Activated T-helper 2 cell treated with anti-CD3 and anti-CD28 coated beads, Interferon-gamma antibody, Interleukin-2, Interleukin-4, amounts not matched to agents 10 μg/mL and 5 μg/mL and 100 μg/mL, durations not matched to agents 14 hours and 24 hours and 36 hours (primary cell): ENCODE measurements at regions of chr17 and their contacts with region 1.

Region 1: DNA sequence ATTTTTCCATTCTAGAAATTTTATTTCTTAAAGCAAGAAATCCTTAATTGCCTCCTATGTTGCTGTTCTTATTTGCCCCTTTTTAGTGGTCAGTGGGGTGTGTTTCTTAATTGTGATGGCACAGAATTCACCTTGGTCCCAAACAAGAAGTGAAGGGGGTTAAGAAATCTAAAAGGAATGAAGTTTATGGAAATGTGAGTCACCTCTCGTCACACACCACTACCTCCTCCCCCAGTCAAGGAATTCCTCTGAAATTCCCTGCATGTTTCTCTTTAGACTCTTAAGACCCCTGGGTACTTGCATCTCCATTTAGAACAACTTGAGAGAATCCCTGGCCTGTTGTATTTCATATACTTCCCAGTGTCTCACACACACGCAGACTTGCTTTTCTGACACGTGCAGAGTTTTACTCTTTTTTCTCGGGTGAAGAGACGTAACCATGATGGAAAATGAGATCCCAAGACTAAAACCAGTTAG is 247.4 kb downstream of the PRKCA start:
- DNase-seq: no peak
- H3K4me3 Mint-ChIP-seq: no peak overlapping the region
- H3K27ac Mint-ChIP-seq: peak overlapping the region; percentile 14
- H3K4me1 Mint-ChIP-seq: peaks cover 46% of the 10 kb centered on the region
- H3K27me3 Mint-ChIP-seq: no peaks in the 10 kb centered on the region

Region 2: DNA sequence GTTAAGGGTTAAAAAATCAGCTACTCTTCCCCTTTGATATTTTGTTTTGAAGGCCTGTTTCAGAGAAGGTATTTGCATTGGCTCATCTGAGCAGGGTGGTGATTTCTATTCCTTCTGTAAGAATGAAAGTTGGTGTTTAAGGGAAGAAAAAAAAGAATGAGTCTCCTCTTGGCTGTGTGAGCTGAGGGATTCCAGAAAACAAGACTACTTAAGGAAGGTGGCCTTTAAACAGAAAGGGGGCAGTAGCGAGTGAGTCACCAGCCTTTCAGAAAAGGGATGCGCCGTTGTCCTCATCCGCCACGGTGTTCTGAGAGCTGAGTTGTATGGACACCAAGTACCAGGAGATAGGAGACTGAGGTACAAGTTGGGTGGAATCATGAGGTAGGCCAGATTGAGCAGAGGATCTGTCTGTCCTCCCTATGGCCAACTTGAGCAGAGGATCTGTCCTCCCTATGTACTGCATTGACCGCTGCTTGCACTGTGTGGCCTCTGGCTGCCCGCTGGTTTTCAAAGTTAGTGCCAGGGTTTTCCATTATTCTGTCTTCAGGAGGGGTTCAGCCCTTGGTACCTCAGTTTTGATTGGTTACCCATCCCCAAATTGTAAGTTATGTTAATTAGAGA is 239.1 kb before region 1 on chr17:
- intact Hi-C with region 1: loop called (anchors 5 kb)
- DNase-seq: no peak
- H3K4me3 Mint-ChIP-seq: peak overlapping the region; percentile 71
- H3K27ac Mint-ChIP-seq: peak overlapping the region; percentile 92
- H3K4me1 Mint-ChIP-seq: peaks cover 84% of the 10 kb centered on the region
- H3K27me3 Mint-ChIP-seq: no peaks in the 10 kb centered on the region

Region 3: DNA sequence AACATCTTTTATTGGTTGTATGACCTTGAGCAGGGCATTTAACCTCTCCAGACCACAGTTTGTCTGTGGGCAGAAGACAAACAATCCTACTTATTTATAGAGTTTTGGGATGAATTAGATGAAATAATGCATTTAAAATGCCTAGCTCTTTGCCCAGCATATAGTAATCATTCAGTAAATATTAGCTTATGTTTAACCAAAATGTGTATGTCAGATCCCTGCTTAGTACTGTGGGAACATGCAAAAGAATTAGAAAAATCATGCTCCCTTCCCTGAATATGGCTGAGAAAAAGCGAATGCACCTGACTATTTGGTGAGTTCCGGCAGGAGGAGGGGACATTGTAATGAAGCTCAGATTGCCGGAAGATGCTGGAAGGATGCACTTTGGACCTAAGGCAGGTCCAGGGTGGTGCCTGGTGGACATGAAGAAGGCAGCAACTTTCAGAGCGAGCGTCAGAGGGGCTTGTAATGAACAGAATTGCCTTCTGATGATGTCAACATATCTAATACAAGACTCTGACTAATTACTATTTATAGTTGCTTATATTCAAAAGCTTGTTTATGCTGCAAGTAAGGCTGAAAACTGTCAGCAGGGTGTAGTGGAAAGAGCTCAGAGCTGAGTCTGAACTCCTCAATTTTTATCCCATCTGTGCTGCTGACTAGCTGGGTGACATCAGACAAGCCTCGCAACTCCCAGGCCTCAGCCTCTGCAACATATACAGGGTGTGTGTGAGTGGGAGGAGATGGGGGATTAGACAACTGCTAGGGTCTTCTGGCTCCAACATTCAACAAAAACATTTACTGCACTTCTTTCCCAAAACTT is 26.2 kb before region 1 on chr17:
- intact Hi-C with region 1: loop called (anchors 2 kb)
- DNase-seq: no peak
- H3K4me3 Mint-ChIP-seq: no peak overlapping the region
- H3K27ac Mint-ChIP-seq: peak overlapping the region; percentile 40
- H3K4me1 Mint-ChIP-seq: peaks cover 59% of the 10 kb centered on the region
- H3K27me3 Mint-ChIP-seq: no peaks in the 10 kb centered on the region

Region 4: GRCh38 chr17:66702106-66702872 is 152.5 kb after region 1 on chr17:
- intact Hi-C with region 1: no loop called
- DNase-seq: no peak
- H3K4me3 Mint-ChIP-seq: no peak overlapping the region
- H3K27ac Mint-ChIP-seq: peak overlapping the region; percentile 19
- H3K4me1 Mint-ChIP-seq: peaks cover 13% of the 10 kb centered on the region
- H3K27me3 Mint-ChIP-seq: no peaks in the 10 kb centered on the region